Heart left ventricle (tissue), 16 donors: ENCODE measurements at regions of chr6 and their contacts with region 1.

Region 1: GRCh38 chr6:168877821-168878282 is 375.8 kb downstream of the THBS2 start:
- DNase-seq: no peak
- ATAC-seq: peak; percentile 69 to 87 (median 76)
- H3K4me3 ChIP-seq: no peak overlapping the region
- H3K27ac ChIP-seq: no peak overlapping the region
- H3K4me1 ChIP-seq: no peaks in the 10 kb centered on the region
- H3K27me3 ChIP-seq: peaks cover 0 to 10% (median 3%) of the 10 kb centered on the region in 9 donors
- CTCF ChIP-seq: no peak
- POLR2A ChIP-seq: no peak

Region 2: DNA sequence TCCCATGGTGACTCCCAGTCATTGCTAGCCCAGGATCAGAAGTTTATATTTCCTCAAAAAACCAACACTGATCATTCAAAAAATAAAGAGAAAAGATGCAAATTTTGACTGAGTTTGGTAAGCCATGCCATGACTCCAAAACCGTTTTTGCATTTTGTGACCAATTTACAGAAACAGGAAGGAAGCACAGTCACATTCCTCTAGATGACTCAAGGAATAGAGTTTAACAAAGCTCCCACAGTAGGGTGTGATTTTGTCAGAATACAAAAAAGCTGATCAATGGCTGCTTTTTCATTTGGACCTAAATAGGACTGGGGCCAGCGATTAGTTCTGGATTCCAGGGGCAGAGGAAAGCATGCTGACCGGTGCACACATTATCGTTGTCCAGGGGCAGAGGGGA is 1230.5 kb before region 1 on chr6:
- intact Hi-C with region 1: no loop called
- DNase-seq: no peak
- ATAC-seq: no peak
- H3K4me3 ChIP-seq: no peak overlapping the region
- H3K27ac ChIP-seq: peak overlapping the region in 1 of 12 donors; percentile 66
- H3K4me1 ChIP-seq: peaks cover 0 to 14% (median 5%) of the 10 kb centered on the region in 12 donors
- H3K27me3 ChIP-seq: no peaks in the 10 kb centered on the region
- CTCF ChIP-seq: no peak
- POLR2A ChIP-seq: no peak

Region 3: DNA sequence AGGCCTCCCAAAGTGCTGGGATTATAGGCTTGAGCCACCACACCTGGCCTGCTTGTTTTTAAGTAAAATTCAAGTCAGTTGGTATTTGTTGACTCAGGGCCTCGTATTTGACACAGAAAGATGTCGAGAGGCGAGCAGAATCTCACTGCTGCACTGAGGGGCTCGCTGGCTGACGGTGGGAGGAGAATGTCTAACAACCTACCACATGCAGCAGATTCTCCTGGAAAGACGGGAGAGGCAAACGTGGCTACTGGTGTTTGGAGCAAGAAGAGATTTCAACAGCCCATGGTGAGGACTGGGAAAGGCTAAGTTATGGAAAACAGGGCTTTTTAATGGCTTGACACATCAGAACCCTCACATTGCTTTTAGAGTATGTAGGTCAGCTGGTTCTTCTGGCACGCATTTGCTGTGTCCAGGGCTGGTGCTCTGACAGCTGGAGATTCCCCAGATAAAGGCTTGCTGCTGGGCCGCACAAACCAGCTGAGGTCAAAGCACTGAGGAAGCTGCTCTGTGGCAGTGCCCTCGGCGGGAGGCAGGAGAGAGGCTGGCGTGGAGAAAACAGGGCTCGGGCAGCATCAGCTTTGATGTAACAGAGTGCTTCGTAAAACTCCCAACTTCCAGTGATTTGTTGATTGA is 714.6 kb before region 1 on chr6:
- intact Hi-C with region 1: loop called in 1 of 10 experiments (anchors 10 kb)
- DNase-seq: no peak
- ATAC-seq: no peak
- H3K4me3 ChIP-seq: no peak overlapping the region
- H3K27ac ChIP-seq: peak overlapping the region in 1 of 12 donors; percentile 58
- H3K4me1 ChIP-seq: no peaks in the 10 kb centered on the region
- H3K27me3 ChIP-seq: peaks cover 0 to 34% (median 0%) of the 10 kb centered on the region in 9 donors
- CTCF ChIP-seq: no peak
- POLR2A ChIP-seq: no peak